Activated naive CD4-positive, alpha-beta T cell treated with anti-CD3 and anti-CD28 coated beads, Interleukin-2, amount 10 ng/mL, durations not matched to agents 7 days and 5 days (primary cell): ENCODE measurements at regions of chr9 and their contacts with region 1.

Region 1: GRCh38 chr9:35051069-35051967 is 21.1 kb downstream of the VCP start:
- DNase-seq: peak; percentile 72
- H3K4me3 Mint-ChIP-seq: no peak overlapping the region
- H3K27ac Mint-ChIP-seq: no peak overlapping the region
- H3K4me1 Mint-ChIP-seq: no peaks in the 10 kb centered on the region
- H3K27me3 Mint-ChIP-seq: no peaks in the 10 kb centered on the region

Region 2: GRCh38 chr9:34759432-34760134 is 291.7 kb before region 1 on chr9:
- CTCF ChIA-PET with region 1: interaction called, 12 read pairs
- DNase-seq: no peak
- H3K4me3 Mint-ChIP-seq: no peak overlapping the region
- H3K27ac Mint-ChIP-seq: no peak overlapping the region
- H3K4me1 Mint-ChIP-seq: peaks cover 9% of the 10 kb centered on the region
- H3K27me3 Mint-ChIP-seq: peaks cover 25% of the 10 kb centered on the region

Region 3: DNA sequence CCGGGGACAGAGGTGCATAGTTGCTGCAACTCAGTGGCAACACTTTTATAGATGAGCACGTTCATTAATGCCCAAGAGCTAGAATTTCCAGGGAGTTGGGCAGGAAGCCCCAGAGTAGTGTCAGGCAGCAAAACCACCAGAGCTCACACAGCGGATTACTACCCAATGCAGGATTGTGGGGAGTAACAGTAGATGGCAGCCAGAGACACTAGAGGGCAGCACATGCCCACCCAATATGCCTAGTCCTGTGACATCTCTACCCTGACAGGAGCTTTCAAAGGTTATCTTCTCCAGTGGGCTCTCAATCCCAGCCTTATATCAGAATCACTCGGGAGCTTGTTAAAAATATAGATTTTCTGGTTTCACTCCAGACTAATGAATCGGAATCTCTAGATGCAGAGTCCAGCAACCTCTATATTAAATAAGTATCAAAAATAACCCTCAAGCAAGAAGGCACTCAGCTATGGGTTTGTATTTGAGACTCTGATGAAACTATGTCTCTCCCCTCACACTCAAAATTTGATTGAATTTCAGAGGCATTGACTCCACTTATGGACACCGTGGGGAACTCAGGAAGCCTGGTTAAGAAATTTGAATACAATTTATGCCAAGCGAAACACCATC is 151.7 kb before region 1 on chr9:
- CTCF ChIA-PET with region 1: interaction called, 71 read pairs
- DNase-seq: peak; percentile 90
- H3K4me3 Mint-ChIP-seq: no peak overlapping the region
- H3K27ac Mint-ChIP-seq: no peak overlapping the region
- H3K4me1 Mint-ChIP-seq: no peaks in the 10 kb centered on the region
- H3K27me3 Mint-ChIP-seq: peaks cover 30% of the 10 kb centered on the region

Region 4: DNA sequence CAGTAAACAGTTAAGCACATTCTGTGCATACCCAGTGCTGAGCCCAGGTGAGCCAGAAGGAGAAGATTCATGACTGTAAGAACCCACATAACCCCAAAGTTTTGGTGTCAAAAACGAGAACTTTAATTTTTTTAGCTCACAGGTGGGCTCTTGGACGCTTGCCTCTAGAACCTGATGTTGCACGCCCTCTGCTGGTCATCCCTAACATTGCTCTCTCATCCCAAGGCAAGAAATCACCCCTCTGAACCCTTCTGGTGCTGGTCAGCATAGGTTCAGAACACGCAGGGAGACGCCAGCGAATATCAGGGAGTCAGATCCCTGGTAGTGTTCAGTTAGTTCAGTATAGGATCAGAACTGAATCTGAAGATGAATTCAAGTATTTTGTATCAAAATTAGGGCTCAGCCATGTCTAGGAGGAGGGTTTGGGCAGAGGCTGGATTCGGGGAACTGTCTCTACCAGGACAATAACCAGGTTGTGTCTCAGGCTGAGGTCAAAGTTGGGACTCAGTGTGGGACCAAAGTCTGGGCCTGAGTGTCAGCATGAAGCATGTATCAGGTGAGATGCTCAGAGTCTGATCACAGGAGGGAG is 65.9 kb before region 1 on chr9:
- CTCF ChIA-PET with region 1: interaction called, 12 read pairs
- DNase-seq: peak; percentile 77
- H3K4me3 Mint-ChIP-seq: no peak overlapping the region
- H3K27ac Mint-ChIP-seq: no peak overlapping the region
- H3K4me1 Mint-ChIP-seq: peaks cover 65% of the 10 kb centered on the region
- H3K27me3 Mint-ChIP-seq: no peaks in the 10 kb centered on the region

Region 5: GRCh38 chr9:34994260-34994899 is 56.9 kb before region 1 on chr9:
- CTCF ChIA-PET with region 1: interaction called, 15 read pairs
- DNase-seq: no peak
- H3K4me3 Mint-ChIP-seq: no peak overlapping the region
- H3K27ac Mint-ChIP-seq: no peak overlapping the region
- H3K4me1 Mint-ChIP-seq: peaks cover 13% of the 10 kb centered on the region
- H3K27me3 Mint-ChIP-seq: peaks cover 6% of the 10 kb centered on the region

Region 6: DNA sequence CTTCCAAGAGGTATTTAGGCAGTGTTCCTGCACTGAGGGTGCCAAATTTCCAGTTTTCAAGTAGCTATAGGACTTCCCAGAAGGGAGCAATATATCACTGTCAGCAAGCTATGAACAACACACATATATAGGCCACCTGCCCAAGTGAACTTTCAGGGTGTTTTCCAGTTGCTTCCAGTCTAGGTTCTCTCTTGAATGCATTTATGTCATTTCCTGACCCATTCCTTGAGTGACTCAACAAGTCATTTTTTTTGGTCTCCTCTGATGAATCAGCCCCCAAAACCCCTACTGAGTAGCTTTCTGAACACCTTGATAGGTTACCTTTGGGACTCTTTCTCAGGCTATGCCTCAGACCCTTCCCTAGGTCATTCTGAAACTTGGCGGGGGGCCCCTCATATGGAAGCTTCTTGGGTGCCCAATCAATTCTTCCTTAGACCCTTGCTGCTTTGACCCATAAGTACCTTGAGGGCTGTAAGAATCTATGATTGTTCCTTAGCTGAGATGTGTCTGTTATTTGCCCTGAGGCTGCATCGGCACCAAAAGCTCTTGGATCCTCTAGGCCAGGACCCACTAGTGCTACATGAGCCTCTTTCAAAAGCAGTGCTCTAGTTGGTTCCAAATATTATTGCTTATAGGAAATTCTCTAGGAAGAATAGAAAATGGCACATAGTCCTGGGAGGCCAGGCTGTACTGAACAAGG is 49.4 kb before region 1 on chr9:
- CTCF ChIA-PET with region 1: interaction called, 12 read pairs
- DNase-seq: no peak
- H3K4me3 Mint-ChIP-seq: no peak overlapping the region
- H3K27ac Mint-ChIP-seq: no peak overlapping the region
- H3K4me1 Mint-ChIP-seq: peaks cover 9% of the 10 kb centered on the region
- H3K27me3 Mint-ChIP-seq: no peaks in the 10 kb centered on the region

Region 7: DNA sequence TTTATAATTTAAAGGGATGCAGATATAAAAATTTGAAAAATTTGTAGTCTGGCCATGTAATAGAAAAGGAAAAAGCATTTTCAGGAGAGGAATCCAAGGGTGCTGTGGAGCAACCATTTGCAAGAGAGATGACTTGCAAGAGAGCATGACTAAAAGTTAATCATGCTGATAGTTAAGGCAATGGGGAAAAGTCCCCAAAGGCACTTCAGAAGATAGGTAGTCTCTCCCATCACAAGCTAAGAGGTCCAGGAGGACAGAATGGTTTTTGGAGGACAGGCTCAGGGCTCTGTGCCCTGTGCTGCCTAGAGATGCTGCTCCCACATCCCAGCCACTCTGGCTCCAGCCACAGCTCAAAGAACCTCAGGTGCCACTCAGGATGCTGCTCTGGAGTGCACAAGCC is 23.0 kb before region 1 on chr9:
- CTCF ChIA-PET with region 1: interaction called, 10 read pairs
- DNase-seq: no peak
- H3K4me3 Mint-ChIP-seq: no peak overlapping the region
- H3K27ac Mint-ChIP-seq: no peak overlapping the region
- H3K4me1 Mint-ChIP-seq: peaks cover 23% of the 10 kb centered on the region
- H3K27me3 Mint-ChIP-seq: no peaks in the 10 kb centered on the region